HEK293 (cell line): ENCODE measurements at regions of chr4 and their contacts with region 1.

Region 1: DNA sequence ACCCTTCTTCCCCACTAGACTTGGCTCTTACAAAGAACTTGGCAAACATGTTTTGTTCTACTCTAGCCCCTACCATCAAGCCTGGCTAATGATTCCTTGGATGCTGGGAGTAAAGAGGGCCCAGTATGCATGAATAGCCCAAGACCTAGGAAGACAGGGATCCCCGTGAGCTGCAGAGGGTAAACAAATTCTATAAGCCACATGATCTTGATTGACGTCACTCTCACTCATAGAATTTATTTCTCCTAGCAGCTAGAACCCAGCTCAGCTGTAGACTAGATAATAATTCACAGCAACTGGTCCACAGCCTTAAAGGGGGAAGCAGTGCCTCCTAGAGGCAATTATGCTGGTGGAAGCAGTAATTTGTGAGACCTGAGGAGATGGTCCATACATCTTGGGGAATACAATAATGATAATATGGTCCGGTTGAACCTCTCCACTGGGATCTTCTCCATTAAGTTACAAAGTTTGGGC is 16.1 kb upstream of the USO1 start:
- H3K4me3 ChIP-seq: no peak overlapping the region
- H3K27ac ChIP-seq: no peak overlapping the region
- H3K4me1 ChIP-seq: no peaks in the 10 kb centered on the region
- CTCF ChIP-seq: no peak

Region 2: DNA sequence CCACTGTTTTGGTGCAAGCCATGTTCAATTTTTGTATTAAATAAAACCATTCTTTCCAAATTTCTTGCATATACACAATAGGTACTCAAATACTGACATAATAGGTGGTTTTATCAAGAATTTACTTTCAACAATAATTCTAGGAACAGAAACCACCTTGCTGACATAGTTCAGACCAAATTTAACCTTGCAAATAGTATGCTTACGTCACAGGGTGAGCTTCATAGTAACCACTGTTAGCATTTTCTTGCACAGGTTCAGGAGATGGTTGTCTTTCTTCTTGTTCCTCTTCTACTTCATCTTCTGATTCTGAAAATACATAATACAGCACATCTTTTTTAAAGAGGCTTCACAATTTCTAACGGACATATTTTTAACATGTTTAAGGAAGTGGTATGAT is 52.7 kb before region 1 on chr4:
- CTCF ChIA-PET with region 1: interaction called, 10 read pairs
- POLR2A ChIA-PET with region 1: no interaction called
- H3K4me3 ChIP-seq: no peak overlapping the region
- H3K27ac ChIP-seq: no peak overlapping the region
- H3K4me1 ChIP-seq: peaks cover under 1% of the 10 kb centered on the region; the same call in 1 of the 2 replicates
- CTCF ChIP-seq: no peak